Sigmoid colon (tissue), 7 donors: ENCODE measurements at regions of chr3 and their contacts with region 1.

Region 1: GRCh38 chr3:123723522-123724168 is 138.8 kb upstream of the HACD2 start:
- DNase-seq: peak; percentile 79
- H3K4me3 ChIP-seq: no peak overlapping the region
- H3K27ac ChIP-seq: peak overlapping the region; percentile 60 to 92 (median 72)
- H3K4me1 ChIP-seq: peaks cover 0 to 50% (median 42%) of the 10 kb centered on the region in 4 donors
- H3K27me3 ChIP-seq: no peaks in the 10 kb centered on the region
- CTCF ChIP-seq: peak; percentile 73 to 81 (median 74)
- EP300 ChIP-seq: no peak
- POLR2A ChIP-seq: no peak

Region 2: GRCh38 chr3:123584988-123585937 is 138.4 kb before region 1 on chr3 and contains the start of gene HACD2:
- intact Hi-C with region 1: loop called (anchors 2 kb)
- DNase-seq: peak; percentile 98
- H3K4me3 ChIP-seq: peak within 1 kb of the TSS; percentile 86 to 99 (median 93)
- H3K27ac ChIP-seq: peak within 1 kb of the TSS; percentile 91 to 96 (median 95)
- H3K4me1 ChIP-seq: peaks cover 0 to 22% (median 12%) of the 10 kb centered on the region in 4 donors
- H3K27me3 ChIP-seq: no peaks in the 10 kb centered on the region
- CTCF ChIP-seq: no peak
- EP300 ChIP-seq: no peak
- POLR2A ChIP-seq: peak; percentile 63 to 79
- total RNA-seq, gene HACD2: 15.3 to 26.4 (median 19.2) TPM

Region 3: DNA sequence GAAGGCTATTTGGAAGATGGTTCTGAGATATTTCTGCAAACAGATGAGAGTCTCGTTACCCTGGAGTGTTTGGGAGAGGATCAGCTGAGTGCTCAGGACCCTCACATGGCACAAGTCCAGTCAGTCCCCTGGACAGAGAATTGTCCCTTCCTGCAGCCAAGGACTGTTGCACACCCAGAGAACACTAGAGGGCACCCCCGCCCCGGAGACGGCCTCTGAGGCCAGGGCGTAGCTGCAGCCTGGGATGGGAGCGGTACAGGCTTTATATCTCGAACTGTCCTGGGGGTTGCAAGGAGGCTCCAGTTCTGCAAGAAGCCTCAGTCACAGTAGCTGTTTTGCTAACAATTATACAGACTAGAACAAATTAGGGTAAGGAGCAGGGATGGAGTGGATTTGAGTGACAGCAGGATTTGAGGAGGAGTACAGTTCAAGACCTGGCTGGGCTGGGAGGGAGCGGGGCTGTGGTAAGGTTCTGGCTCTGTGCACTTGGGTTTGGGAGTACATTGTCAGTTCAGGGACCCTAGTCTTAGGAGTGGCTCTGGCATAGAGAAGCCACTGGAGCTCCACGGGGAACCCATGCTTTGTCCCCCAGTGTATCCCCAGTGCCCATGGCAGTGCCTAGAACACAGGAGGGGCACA is 71.2 kb before region 1 on chr3:
- intact Hi-C with region 1: loop called (anchors 2 kb)
- DNase-seq: peak; percentile 91
- H3K4me3 ChIP-seq: no peak overlapping the region
- H3K27ac ChIP-seq: peak overlapping the region; percentile 89 to 98 (median 94)
- H3K4me1 ChIP-seq: peaks cover 0 to 99% (median 92%) of the 10 kb centered on the region in 4 donors
- H3K27me3 ChIP-seq: no peaks in the 10 kb centered on the region
- CTCF ChIP-seq: peak in 2 of 4 experiments; percentile 79 to 86
- EP300 ChIP-seq: no peak
- POLR2A ChIP-seq: no peak

Region 4: DNA sequence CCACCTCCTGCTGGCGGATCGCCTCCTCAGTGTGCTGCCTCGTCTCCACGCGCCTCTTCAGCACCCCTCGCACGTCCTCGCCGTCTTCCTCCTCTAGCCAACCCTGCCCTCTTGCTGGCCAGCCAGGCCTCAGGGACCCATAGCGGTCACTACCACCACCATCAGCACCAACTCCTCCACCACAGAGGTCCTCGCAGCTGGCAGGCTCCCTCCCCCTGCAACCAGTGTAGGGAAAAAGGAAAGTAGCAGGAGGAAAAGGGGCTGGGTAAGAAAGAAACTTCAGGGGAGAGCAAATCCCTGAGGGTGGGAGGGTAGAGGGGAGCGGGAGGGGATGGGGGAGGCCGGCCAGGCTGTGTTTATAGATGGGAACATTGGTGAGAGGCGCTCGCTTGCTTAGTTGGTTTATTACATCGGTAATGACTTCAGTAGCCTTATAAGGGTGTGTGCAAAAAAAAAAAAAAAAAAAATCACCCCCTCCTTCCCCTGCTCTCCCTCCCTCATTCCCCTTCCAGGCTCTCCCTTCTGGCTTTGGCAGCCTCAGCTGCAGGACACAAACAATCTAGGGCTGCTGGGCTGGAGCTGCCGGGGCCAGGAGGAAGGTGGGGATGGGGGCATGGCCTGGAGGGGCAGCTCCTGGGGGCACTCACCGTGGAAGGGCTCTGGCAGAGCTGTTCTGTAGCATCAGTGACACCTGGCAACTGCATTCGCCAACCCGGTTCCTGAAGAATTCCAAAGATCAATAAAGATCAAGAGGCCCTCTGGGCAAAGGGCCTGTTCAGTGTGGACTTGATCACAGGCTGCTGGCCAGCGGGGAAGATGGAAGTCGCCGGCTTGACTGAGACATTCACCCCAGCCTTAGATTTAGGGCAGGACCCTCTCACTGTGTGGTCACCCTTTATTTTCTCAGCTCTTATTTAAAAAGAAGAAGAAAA is 22.6 kb before region 1 on chr3:
- intact Hi-C with region 1: loop called (anchors 1 kb)
- DNase-seq: peak; percentile 95
- H3K4me3 ChIP-seq: peak overlapping the region; percentile 68 to 81 (median 73)
- H3K27ac ChIP-seq: peak overlapping the region; percentile 89 to 98 (median 94)
- H3K4me1 ChIP-seq: peaks cover 2 to 45% (median 37%) of the 10 kb centered on the region in 4 donors
- H3K27me3 ChIP-seq: no peaks in the 10 kb centered on the region
- CTCF ChIP-seq: peak in 1 of 4 experiments; percentile 8
- EP300 ChIP-seq: peak in 2 of 4 donors; percentile 14 to 28
- POLR2A ChIP-seq: peak; percentile 91 to 95

Region 5: GRCh38 chr3:123799544-123800361 is 76.1 kb after region 1 on chr3:
- intact Hi-C with region 1: no loop called
- DNase-seq: no peak
- H3K4me3 ChIP-seq: no peak overlapping the region
- H3K27ac ChIP-seq: no peak overlapping the region
- H3K4me1 ChIP-seq: no peaks in the 10 kb centered on the region
- H3K27me3 ChIP-seq: no peaks in the 10 kb centered on the region
- CTCF ChIP-seq: no peak
- EP300 ChIP-seq: no peak
- POLR2A ChIP-seq: no peak